Activated T-helper 2 cell treated with anti-CD3 and anti-CD28 coated beads, Interferon-gamma antibody, Interleukin-2, Interleukin-4, amounts not matched to agents 10 μg/mL and 5 μg/mL and 100 μg/mL, durations not matched to agents 14 hours and 24 hours and 36 hours (primary cell): ENCODE measurements at regions of chr5 and their contacts with region 1.

Region 1: DNA sequence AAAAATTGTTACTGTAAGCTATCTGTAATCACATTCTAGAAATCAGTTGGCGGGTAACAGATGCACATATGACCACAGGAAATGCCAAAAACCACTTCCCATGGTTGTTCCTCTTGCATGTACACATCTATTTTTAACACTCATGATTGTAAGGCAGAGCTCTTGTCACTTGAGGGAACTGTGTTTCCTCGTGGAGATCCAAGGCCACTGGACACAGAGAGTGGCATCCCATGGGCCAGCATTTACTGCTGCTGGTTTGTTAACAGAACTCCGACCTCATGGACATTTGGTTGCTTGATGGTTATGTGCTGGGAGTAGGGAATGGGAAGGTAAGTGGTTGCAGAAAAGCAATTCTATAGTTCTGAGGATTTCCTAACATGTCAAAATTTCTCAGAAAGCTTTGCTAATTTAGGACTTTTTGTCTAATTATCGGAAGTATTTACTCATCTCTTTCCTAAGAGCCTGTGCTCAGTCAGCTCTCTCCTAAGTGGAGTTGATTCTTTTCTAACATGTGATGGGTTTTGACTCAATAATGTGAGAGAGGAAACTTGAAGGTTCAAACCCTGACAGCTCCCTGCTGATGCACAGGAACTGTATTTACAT is 202.0 kb upstream of the NR3C1 start:
- DNase-seq: peak; percentile 44
- H3K4me3 Mint-ChIP-seq: peak overlapping the region; percentile 68
- H3K27ac Mint-ChIP-seq: peak overlapping the region; percentile 92
- H3K4me1 Mint-ChIP-seq: peaks cover 44% of the 10 kb centered on the region
- H3K27me3 Mint-ChIP-seq: no peaks in the 10 kb centered on the region

Region 2: GRCh38 chr5:142959683-142960657 is 645.5 kb before region 1 on chr5:
- intact Hi-C with region 1: no loop called
- DNase-seq: no peak
- H3K4me3 Mint-ChIP-seq: no peak overlapping the region
- H3K27ac Mint-ChIP-seq: no peak overlapping the region
- H3K4me1 Mint-ChIP-seq: peaks cover 22% of the 10 kb centered on the region
- H3K27me3 Mint-ChIP-seq: no peaks in the 10 kb centered on the region

Region 3: GRCh38 chr5:143106174-143106573 is 499.3 kb before region 1 on chr5:
- intact Hi-C with region 1: loop called (anchors 10 kb)
- DNase-seq: no peak
- H3K4me3 Mint-ChIP-seq: no peak overlapping the region
- H3K27ac Mint-ChIP-seq: no peak overlapping the region
- H3K4me1 Mint-ChIP-seq: peaks cover 46% of the 10 kb centered on the region
- H3K27me3 Mint-ChIP-seq: no peaks in the 10 kb centered on the region

Region 4: GRCh38 chr5:143403593-143404415 is 201.7 kb before region 1 on chr5 and contains the start of gene NR3C1:
- intact Hi-C with region 1: loop called (anchors 1 kb)
- DNase-seq: peak; percentile 81
- H3K4me3 Mint-ChIP-seq: peak within 1 kb of the TSS; percentile 88
- H3K27ac Mint-ChIP-seq: peak within 1 kb of the TSS; percentile 97
- H3K4me1 Mint-ChIP-seq: peaks cover 45% of the 10 kb centered on the region
- H3K27me3 Mint-ChIP-seq: no peaks in the 10 kb centered on the region
- total RNA-seq, gene NR3C1: 51.3 and 52.0 TPM in 2 replicates

Region 5: DNA sequence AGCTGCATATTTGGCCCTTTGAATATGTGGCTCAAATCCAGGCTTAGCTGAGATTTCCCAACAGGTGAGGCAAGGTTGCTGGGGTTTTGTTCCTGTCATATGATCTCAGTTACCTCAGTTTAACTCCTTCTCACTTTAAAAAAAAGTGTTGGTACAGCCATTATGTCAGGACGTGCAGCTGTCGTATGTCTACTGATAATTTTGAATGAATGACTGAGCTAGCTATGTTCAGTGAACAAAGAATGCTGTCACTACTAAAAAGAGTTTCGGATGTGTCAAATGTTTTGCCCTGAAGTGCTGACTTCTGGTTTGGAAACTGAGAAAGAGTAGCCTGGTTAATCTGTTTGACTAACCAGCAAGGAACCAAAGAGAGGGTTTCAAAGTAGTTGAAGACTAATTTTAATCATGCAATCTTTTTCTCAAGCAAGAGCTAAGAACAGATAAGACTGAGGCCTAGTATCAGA is 95.7 kb before region 1 on chr5:
- intact Hi-C with region 1: loop called (anchors 1 kb)
- DNase-seq: no peak
- H3K4me3 Mint-ChIP-seq: no peak overlapping the region
- H3K27ac Mint-ChIP-seq: no peak overlapping the region
- H3K4me1 Mint-ChIP-seq: peaks cover 25% of the 10 kb centered on the region
- H3K27me3 Mint-ChIP-seq: no peaks in the 10 kb centered on the region

Region 6: GRCh38 chr5:143679777-143680176 is 74.3 kb after region 1 on chr5:
- intact Hi-C with region 1: loop called (anchors 1 kb)
- DNase-seq: no peak
- H3K4me3 Mint-ChIP-seq: no peak overlapping the region
- H3K27ac Mint-ChIP-seq: peak overlapping the region; percentile 71
- H3K4me1 Mint-ChIP-seq: peaks cover 27% of the 10 kb centered on the region
- H3K27me3 Mint-ChIP-seq: no peaks in the 10 kb centered on the region

Region 7: GRCh38 chr5:143874312-143874711 is 268.8 kb after region 1 on chr5:
- intact Hi-C with region 1: no loop called
- DNase-seq: no peak
- H3K4me3 Mint-ChIP-seq: no peak overlapping the region
- H3K27ac Mint-ChIP-seq: no peak overlapping the region
- H3K4me1 Mint-ChIP-seq: no peaks in the 10 kb centered on the region
- H3K27me3 Mint-ChIP-seq: peaks cover 12% of the 10 kb centered on the region

Region 8: DNA sequence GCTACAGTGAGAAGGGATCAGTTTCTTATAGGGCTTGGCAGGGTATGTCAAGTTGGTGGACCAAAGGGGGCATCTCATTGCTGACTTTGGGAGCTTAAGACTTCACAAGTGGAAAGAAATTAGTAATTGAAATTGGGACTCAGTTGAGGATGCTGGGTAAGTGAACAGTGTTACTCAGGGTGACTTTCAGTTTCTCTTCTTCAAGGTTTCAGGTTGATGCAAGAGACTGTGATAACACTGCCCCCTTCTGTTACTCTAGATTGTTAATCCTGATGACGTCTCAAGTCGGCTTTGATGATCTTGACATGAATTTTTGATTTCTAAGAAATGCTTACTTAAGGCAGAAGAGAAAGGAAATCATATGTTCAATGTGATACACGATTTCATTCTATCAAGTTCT is 586.5 kb after region 1 on chr5:
- intact Hi-C with region 1: loop called (anchors 1 kb)
- DNase-seq: peak; percentile 40
- H3K4me3 Mint-ChIP-seq: no peak overlapping the region
- H3K27ac Mint-ChIP-seq: no peak overlapping the region
- H3K4me1 Mint-ChIP-seq: peaks cover 27% of the 10 kb centered on the region
- H3K27me3 Mint-ChIP-seq: peaks cover 7% of the 10 kb centered on the region